Activated CD4-positive, alpha-beta memory T cell treated with anti-CD3 and anti-CD28 coated beads, Interleukin-2, amount 10 ng/mL, durations not matched to agents 7 days and 5 days (primary cell): ENCODE measurements at regions of chr11 and their contacts with region 1.

Region 1: GRCh38 chr11:59542142-59542810 is 30.9 kb downstream of the OR4D9 start:
- DNase-seq: no peak
- H3K4me3 Mint-ChIP-seq: no peak overlapping the region
- H3K27ac Mint-ChIP-seq: no peak overlapping the region
- H3K4me1 Mint-ChIP-seq: peaks cover 17% of the 10 kb centered on the region
- H3K27me3 Mint-ChIP-seq: peaks cover 4% of the 10 kb centered on the region

Region 2: DNA sequence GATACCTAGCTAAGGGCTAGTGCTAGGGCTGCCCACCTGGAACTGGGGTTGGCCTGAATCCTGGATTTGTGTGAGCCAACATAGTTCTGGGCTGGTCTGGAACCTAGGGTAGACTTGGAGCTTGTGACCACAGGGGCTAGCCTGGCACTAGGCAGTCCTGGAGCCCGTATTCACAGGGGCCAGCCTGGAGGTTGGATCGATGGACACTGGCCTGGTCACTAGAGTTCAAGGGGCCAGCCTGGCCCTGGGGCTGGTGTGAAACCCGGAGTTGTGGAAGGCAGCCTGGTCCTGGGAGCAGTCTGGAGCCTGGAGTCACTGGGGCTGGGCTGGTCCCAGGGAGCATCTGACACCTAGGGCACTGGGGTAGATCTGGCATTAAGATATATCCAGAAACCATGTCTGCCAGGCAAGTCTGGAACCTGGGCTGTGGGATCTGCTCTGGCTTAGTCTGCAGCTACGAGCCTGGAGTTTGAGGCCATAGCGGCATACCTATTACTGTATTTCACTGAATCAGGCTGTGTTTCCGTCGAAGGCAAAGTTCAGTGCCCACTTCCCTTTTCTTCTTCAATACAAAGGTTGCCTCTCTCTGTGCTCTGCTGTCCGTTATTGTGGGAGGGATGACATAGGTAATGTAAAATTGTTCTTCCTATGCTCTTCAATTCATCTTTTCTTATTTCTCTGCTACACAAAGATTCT is 465.3 kb before region 1 on chr11:
- CTCF ChIA-PET with region 1: no interaction called
- POLR2A ChIA-PET with region 1: no interaction called
- DNase-seq: no peak
- H3K4me3 Mint-ChIP-seq: no peak overlapping the region
- H3K27ac Mint-ChIP-seq: no peak overlapping the region
- H3K4me1 Mint-ChIP-seq: no peaks in the 10 kb centered on the region
- H3K27me3 Mint-ChIP-seq: peaks cover 35% of the 10 kb centered on the region

Region 3: DNA sequence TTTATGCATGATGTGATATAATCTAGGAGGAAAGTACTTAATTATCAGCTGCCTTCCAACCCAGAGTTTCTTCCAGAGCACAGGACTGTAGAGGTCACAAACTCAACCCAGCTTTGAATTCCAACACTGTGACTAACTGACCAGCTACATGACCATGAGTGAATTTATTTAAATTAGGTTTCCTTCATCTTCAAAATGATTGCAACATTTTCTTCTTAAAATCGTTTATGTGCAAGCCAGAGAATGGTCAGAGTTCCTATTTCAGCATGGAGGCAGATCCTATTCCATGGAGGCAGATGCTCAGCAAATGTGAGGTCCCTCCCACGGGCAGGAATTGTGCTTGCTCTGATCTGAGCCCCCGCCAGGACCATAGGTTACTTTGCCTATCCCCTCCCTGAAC is 31.0 kb after region 1 on chr11:
- CTCF ChIA-PET with region 1: no interaction called
- POLR2A ChIA-PET with region 1: no interaction called
- DNase-seq: no peak
- H3K4me3 Mint-ChIP-seq: no peak overlapping the region
- H3K27ac Mint-ChIP-seq: no peak overlapping the region
- H3K4me1 Mint-ChIP-seq: no peaks in the 10 kb centered on the region
- H3K27me3 Mint-ChIP-seq: no peaks in the 10 kb centered on the region

Region 4: GRCh38 chr11:59680287-59681154 is 138.2 kb after region 1 on chr11:
- CTCF ChIA-PET with region 1: interaction called, 12 read pairs
- POLR2A ChIA-PET with region 1: no interaction called
- DNase-seq: peak; percentile 63
- H3K4me3 Mint-ChIP-seq: no peak overlapping the region
- H3K27ac Mint-ChIP-seq: no peak overlapping the region
- H3K4me1 Mint-ChIP-seq: no peaks in the 10 kb centered on the region
- H3K27me3 Mint-ChIP-seq: peaks cover 14% of the 10 kb centered on the region